ENCODE measurements at regions of chr12 and their contacts with region 1.

Region 1: GRCh38 chr12:3252450-3252891 is 175.3 kb downstream of the TSPAN9 start:
- DNase-seq: peak; percentile 56 to 62
- H3K4me3 ChIP-seq: no peak overlapping the region
- H3K27ac ChIP-seq: peak overlapping the region in 1 of 2 donors; percentile 75
- H3K4me1 ChIP-seq: peaks cover 0 to 6% of the 10 kb centered on the region in 2 donors
- H3K27me3 ChIP-seq: no peaks in the 10 kb centered on the region
- CTCF ChIP-seq: no peak
- POLR2A ChIP-seq: no peak

Region 2: DNA sequence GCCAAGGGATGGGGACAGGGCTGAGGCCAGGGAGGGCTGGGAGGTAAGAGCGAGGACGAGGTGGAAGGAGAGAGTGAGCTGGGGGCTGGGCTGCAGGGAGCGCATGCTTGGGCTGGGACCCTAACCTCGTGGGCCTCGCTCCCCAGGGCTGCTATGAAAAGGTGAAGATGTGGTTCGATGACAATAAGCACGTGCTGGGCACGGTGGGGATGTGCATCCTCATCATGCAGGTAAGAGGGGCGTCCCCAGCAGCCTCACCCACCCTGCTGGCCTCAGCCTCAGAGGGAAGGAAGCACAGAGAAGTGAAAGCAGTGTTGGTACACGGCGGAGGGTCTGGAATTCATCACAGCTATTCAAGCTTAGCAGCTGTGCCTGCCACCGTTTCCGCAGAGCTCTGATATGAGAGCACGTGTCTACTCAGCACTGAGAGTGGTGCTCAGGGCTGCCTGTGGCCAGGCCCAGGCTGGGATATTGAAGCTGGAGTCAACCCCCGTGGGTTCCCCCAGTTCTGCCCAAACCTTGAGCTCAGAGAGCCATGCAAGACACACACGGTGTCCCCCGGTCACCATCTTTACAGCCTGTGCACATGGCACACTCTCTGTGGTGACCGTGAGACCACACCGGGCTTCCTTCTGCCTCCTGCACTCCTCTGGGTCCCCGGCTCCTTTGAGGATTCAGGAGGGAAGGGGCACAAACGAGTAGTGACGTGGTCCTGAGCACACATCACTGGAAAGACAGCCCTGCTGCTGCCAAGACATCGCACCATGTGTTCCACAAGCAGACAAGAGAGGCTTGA is 29.3 kb after region 1 on chr12:
- intact Hi-C with region 1: no loop called
- DNase-seq: no peak
- H3K4me3 ChIP-seq: no peak overlapping the region
- H3K27ac ChIP-seq: no peak overlapping the region
- H3K4me1 ChIP-seq: no peaks in the 10 kb centered on the region
- H3K27me3 ChIP-seq: no peaks in the 10 kb centered on the region
- CTCF ChIP-seq: no peak
- POLR2A ChIP-seq: no peak

Region 3: GRCh38 chr12:4037747-4038312 is 785.4 kb after region 1 on chr12:
- intact Hi-C with region 1: loop called (anchors 5 kb)
- DNase-seq: peak in 1 of 2 donors; percentile 35
- H3K4me3 ChIP-seq: no peak overlapping the region
- H3K27ac ChIP-seq: no peak overlapping the region
- H3K4me1 ChIP-seq: no peaks in the 10 kb centered on the region
- H3K27me3 ChIP-seq: no peaks in the 10 kb centered on the region
- CTCF ChIP-seq: peak; percentile 48 to 79 (median 75)
- POLR2A ChIP-seq: no peak

Region 4: GRCh38 chr12:4239746-4240145 is 987.3 kb after region 1 on chr12:
- intact Hi-C with region 1: loop called (anchors 5 kb)
- DNase-seq: no peak
- H3K4me3 ChIP-seq: no peak overlapping the region
- H3K27ac ChIP-seq: no peak overlapping the region
- H3K4me1 ChIP-seq: no peaks in the 10 kb centered on the region
- H3K27me3 ChIP-seq: peaks cover 0 to 10% of the 10 kb centered on the region in 2 donors
- CTCF ChIP-seq: no peak
- POLR2A ChIP-seq: no peak

Measured in breast epithelium (tissue), 4 donors.